GM12878 (cell line): ENCODE measurements at regions of chr2 and their contacts with region 1.

Region 1: GRCh38 chr2:150555611-150556356 is 68.3 kb upstream of the RND3 start:
- DNase-seq: no peak
- ATAC-seq: peak; percentile 63
- H3K4me3 ChIP-seq: no peak overlapping the region
- H3K27ac ChIP-seq: no peak overlapping the region
- H3K4me1 ChIP-seq: no peaks in the 10 kb centered on the region
- H3K27me3 ChIP-seq: no peaks in the 10 kb centered on the region
- CTCF ChIP-seq: no peak
- EP300 ChIP-seq: no peak
- POLR2A ChIP-seq: no peak
- RAD21 ChIP-seq: no peak

Region 2: GRCh38 chr2:150570712-150571111 is 14.9 kb after region 1 on chr2:
- CTCF ChIA-PET with region 1: interaction called, 13 read pairs
- POLR2A ChIA-PET with region 1: interaction called, 7 read pairs
- RAD21 ChIA-PET with region 1: interaction called, 24 read pairs
- SMC1A ChIA-PET with region 1: interaction called, 100 read pairs
- in situ Hi-C with region 1: no loop called
- intact Hi-C with region 1: no loop called
- DNase-seq: no peak
- ATAC-seq: no peak
- H3K4me3 ChIP-seq: no peak overlapping the region
- H3K27ac ChIP-seq: no peak overlapping the region
- H3K4me1 ChIP-seq: peaks cover 3% of the 10 kb centered on the region; the same call in 1 of the 2 replicates
- H3K27me3 ChIP-seq: no peaks in the 10 kb centered on the region
- CTCF ChIP-seq: no peak
- EP300 ChIP-seq: no peak
- POLR2A ChIP-seq: no peak
- RAD21 ChIP-seq: no peak